ENCODE measurements at regions of chr7 and their contacts with region 1.

Region 1: DNA sequence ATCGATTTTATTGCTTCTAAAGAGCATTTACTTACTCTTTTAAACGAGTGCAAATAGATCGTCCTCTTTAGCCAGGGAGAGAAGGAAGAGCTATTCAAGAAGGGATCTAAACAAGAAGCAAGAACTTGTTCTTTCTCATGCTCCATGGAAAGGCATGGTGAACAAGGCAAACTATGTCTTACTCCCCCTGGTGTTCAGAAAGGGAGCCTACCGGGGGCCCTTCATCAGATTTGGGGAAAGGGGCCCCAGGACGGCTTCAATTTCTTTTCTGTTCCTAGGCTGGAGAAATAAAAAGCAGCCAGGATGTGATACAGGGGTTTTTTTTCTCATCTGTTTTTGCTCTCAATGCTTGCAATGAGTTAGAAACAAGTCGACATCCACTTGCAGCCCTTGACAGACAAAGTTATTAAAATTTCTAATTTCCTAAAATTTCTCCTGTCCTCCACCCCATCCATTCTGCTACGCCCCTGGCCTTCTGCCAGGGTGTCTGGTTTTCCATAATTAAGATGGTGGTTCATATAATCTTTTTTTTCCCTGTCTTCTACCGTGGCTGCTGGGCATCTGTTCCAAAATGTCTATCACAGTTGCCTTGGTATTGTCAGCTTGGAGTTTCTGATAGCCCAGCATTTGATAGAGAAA is 214.4 kb downstream of the CREB5 start:
- DNase-seq: no peak
- ATAC-seq: peak; percentile 60
- H3K4me3 Mint-ChIP-seq: no peak overlapping the region
- H3K27ac Mint-ChIP-seq: no peak overlapping the region
- H3K4me1 Mint-ChIP-seq: no peaks in the 10 kb centered on the region
- H3K27me3 Mint-ChIP-seq: peaks cover 13% of the 10 kb centered on the region
- CTCF ChIP-seq: no peak

Region 2: DNA sequence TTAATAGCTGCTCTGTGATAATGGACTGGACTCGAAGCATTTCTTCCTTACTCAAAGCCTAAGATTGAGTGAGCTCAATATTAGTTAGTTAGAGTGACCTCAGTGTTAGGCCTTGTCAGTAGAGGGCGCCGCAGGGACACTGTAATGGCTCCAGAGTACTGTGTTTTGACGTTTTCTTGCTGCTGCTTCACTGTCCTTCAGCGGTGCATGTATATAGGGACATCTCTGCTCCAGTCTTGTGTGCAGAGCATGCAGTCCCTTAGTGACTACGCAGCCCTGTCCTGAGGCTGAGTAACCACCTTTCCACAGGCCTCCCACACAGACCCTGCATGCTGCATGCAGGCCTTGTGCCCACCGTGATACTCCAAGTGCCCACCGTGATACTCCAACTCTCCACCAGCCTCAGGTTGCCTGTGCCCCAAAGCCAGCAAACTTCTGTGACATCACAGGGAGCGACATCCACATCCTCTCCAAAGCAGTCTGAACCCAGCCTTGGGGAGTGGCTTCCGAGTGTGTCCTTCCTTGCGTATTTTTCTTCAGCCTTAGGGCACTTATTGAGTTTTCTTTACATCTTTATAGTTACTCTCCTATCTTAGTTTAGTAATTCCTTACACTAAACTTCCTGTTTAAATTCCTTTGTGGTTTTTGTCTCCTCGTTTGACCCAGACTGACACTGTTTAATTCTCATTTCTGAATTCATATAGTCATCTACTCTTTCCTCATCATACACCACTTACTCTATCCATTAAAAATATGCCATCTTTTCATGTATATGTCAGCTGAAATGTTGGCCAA is 564.3 kb before region 1 on chr7:
- CTCF ChIA-PET with region 1: no interaction called
- POLR2A ChIA-PET with region 1: no interaction called
- intact Hi-C with region 1: loop called (anchors 1 kb)
- DNase-seq: peak; percentile 33
- ATAC-seq: peak; percentile 64
- H3K4me3 Mint-ChIP-seq: no peak overlapping the region
- H3K27ac Mint-ChIP-seq: no peak overlapping the region
- H3K4me1 Mint-ChIP-seq: peaks cover 34% of the 10 kb centered on the region
- H3K27me3 Mint-ChIP-seq: no peaks in the 10 kb centered on the region
- CTCF ChIP-seq: peak; percentile 40

Region 3: DNA sequence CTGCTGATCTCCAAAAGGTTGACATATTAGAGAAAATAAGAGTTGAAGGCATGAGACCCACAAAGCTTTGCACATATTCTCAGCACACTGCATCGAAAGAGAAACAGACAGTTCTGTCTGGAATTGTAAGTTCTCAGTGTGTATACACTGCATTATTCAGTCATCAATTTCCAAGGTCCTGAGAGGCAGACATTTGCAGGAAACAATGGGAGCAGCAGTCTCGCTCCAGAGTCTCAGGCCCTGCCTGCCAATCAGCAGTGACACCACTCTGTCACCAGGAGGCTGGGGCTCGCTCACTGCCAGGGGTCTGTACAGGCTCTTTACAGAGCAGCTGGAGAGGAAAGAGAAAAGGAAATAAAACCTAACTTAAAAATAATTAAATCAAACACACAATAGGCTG is 482.5 kb before region 1 on chr7:
- CTCF ChIA-PET with region 1: no interaction called
- POLR2A ChIA-PET with region 1: no interaction called
- intact Hi-C with region 1: loop called (anchors 10 kb)
- DNase-seq: no peak
- ATAC-seq: peak; percentile 76
- H3K4me3 Mint-ChIP-seq: no peak overlapping the region
- H3K27ac Mint-ChIP-seq: no peak overlapping the region
- H3K4me1 Mint-ChIP-seq: peaks cover 61% of the 10 kb centered on the region
- H3K27me3 Mint-ChIP-seq: no peaks in the 10 kb centered on the region
- CTCF ChIP-seq: no peak

Region 4: DNA sequence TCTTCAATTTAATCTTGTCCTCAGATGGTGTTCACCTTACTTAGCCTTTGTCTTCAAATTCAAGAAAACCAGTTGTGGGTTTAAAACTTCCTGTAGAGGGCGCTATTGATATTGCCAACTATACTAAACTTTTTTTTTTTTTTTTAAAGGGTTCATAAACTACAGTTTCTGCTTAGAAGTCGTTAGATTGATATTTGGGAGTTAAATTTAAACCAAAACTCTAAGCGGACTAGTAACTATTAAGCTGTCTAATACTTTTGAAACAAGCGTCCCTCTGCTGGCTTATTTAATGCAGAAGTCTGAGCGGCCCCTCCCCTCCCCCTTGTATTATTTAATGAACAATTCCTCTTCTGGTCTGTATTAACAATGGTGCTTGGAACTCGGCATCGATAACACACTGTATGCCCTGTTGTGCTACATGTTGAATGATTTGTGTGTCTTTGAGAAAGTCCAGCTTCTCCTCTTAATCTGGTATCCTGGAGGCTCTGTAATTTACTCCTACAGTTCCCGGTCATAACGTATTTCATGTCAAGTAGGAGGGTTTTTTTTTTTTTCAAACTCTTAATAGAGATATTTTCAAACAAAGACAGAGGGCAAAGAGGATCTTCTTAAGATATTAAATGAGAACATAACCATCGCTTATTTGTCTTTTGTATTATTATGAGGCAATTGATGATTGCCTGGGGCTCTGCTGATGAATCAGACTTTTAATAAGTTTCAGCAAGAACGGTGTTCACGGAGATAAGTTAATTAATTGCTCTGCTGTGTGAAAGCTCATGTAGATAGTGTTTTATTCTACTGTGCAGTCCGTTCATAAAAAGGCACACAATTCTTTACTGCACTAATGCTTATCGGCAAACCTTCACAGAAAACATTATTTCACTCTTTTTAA is 237.0 kb before region 1 on chr7:
- CTCF ChIA-PET with region 1: interaction called, 4 read pairs
- POLR2A ChIA-PET with region 1: no interaction called
- intact Hi-C with region 1: loop called (anchors 1 kb)
- DNase-seq: no peak
- ATAC-seq: peak; percentile 25
- H3K4me3 Mint-ChIP-seq: no peak overlapping the region
- H3K27ac Mint-ChIP-seq: no peak overlapping the region
- H3K4me1 Mint-ChIP-seq: peaks cover 3% of the 10 kb centered on the region
- H3K27me3 Mint-ChIP-seq: peaks cover 17% of the 10 kb centered on the region
- CTCF ChIP-seq: peak; percentile 44

Measured in activated B cell treated with CpG ODN at 0.5 μM for 24 hours (primary cell).